ENCODE measurements at regions of chr20 and their contacts with region 1.

Region 1: GRCh38 chr20:35146920-35147574 is at the start of gene EDEM2:
- DNase-seq: peak; percentile 100
- H3K4me3 ChIP-seq: peak within 1 kb of the TSS; percentile 53
- H3K4me3 Mint-ChIP-seq: peak within 1 kb of the TSS; percentile 88
- H3K27ac Mint-ChIP-seq: peak within 1 kb of the TSS; percentile 96
- H3K4me1 ChIP-seq: peaks cover 20% of the 10 kb centered on the region
- H3K4me1 Mint-ChIP-seq: peaks cover 39% of the 10 kb centered on the region
- H3K27me3 ChIP-seq: no peaks in the 10 kb centered on the region
- H3K27me3 Mint-ChIP-seq: no peaks in the 10 kb centered on the region
- CTCF ChIP-seq: peak in 1 of 2 experiments; percentile 18
- total RNA-seq, gene EDEM2: 41.2 and 42.4 TPM in 2 replicates

Region 2: DNA sequence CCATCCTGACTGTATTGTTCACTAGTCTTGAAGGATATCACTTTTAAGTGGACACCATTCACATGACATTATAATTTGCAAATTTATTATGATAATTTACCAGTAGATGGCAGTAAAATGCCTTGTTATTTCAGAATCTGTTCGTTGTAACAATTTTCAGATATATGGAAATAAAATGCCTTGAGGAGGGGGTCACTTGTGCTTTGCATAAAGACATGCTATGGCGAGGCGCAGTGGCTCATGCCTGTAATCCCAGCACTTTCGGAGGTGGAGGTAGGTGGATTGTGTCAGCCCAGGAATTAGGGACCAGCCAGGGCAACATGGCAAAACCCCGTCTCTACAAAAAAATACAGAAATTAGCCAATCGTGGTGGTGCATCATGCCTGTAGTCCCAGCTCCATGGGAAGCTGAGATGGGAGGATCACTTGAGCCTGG is 312.6 kb before region 1 on chr20:
- CTCF ChIA-PET with region 1: interaction called, 3 read pairs
- POLR2A ChIA-PET with region 1: no interaction called
- intact Hi-C with region 1: loop called (anchors 5 kb)
- DNase-seq: peak in 1 of 2 experiments; percentile 40
- H3K4me3 ChIP-seq: no peak overlapping the region
- H3K4me3 Mint-ChIP-seq: no peak overlapping the region
- H3K27ac Mint-ChIP-seq: no peak overlapping the region
- H3K4me1 ChIP-seq: peaks cover 7% of the 10 kb centered on the region; the same call in 1 of the 2 replicates
- H3K4me1 Mint-ChIP-seq: no peaks in the 10 kb centered on the region
- H3K27me3 ChIP-seq: no peaks in the 10 kb centered on the region
- H3K27me3 Mint-ChIP-seq: peaks cover 9% of the 10 kb centered on the region
- CTCF ChIP-seq: peak; percentile 43 to 75

Region 3: DNA sequence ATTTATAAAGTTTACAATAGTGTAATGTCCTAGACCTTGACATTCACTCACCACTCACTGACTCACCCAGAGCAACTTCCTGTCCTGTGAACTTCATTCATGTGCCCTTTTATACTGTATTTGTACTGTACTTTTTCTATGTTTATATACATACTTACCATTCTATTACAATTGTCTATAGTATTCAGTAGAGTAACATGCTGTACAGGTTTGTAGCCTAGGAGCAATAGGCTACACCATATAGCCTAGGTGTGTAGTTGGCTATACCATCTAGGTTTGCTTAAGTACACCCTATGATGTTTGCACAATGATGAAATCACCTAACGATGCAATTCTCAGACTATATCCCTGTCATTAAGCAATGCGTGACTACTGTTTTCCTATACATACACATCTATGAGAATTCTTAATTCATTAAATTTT is 17.4 kb before region 1 on chr20:
- CTCF ChIA-PET with region 1: interaction called, 13 read pairs
- POLR2A ChIA-PET with region 1: interaction called, 3 read pairs
- intact Hi-C with region 1: no loop called
- DNase-seq: peak in 1 of 2 experiments; percentile 50
- H3K4me3 ChIP-seq: no peak overlapping the region
- H3K4me3 Mint-ChIP-seq: no peak overlapping the region
- H3K27ac Mint-ChIP-seq: no peak overlapping the region
- H3K4me1 ChIP-seq: peaks cover 8% of the 10 kb centered on the region; the same call in 1 of the 2 replicates
- H3K4me1 Mint-ChIP-seq: no peaks in the 10 kb centered on the region
- H3K27me3 ChIP-seq: no peaks in the 10 kb centered on the region
- H3K27me3 Mint-ChIP-seq: no peaks in the 10 kb centered on the region
- CTCF ChIP-seq: no peak

Region 4: GRCh38 chr20:35207950-35208611 is 61.0 kb after region 1 on chr20:
- CTCF ChIA-PET with region 1: interaction called, 189 read pairs
- POLR2A ChIA-PET with region 1: interaction called, 10 read pairs
- intact Hi-C with region 1: loop called (anchors 1 kb)
- DNase-seq: peak; percentile 93 to 96
- H3K4me3 ChIP-seq: no peak overlapping the region; the same call in 1 of the 2 replicates
- H3K4me3 Mint-ChIP-seq: no peak overlapping the region
- H3K27ac Mint-ChIP-seq: no peak overlapping the region
- H3K4me1 ChIP-seq: peaks cover 21% of the 10 kb centered on the region; the same call in 1 of the 2 replicates
- H3K4me1 Mint-ChIP-seq: peaks cover 5% of the 10 kb centered on the region
- H3K27me3 ChIP-seq: no peaks in the 10 kb centered on the region
- H3K27me3 Mint-ChIP-seq: no peaks in the 10 kb centered on the region
- CTCF ChIP-seq: peak; percentile 92 to 98

Region 5: DNA sequence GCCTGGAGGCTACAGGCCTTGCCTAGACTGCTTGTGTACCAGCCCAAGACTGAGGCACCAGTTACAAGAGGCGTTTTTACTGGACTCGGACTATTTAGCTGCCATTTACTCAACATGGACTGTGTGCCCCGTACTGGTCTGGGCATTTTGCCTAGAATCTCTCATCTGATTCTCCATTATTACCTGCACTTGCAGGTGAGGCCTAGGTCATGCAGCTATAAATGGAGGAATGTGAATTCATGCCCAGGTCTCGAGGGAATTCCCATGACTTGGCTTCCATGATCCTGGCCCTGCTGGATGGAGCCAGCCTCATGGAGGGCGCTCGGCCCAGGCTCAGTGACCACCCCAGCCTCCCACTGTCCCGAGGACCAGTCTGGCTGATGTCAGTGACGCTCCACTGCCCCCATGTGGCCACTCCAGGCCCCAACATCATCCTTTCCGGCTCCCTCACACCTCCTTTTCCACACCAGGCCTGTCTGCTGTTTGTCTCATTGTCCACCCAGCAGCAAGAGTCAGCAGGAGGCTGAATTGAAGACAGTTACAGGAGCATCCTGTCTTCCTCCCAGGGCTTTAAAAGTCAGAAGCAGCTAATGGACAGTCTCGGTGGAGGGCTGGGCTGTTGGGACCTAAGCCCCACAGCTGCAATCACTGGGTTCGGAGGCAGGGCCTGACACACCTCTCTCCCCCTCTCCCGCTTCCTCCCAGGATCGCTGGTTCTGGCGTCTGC is 122.2 kb after region 1 on chr20:
- CTCF ChIA-PET with region 1: interaction called, 354 read pairs
- POLR2A ChIA-PET with region 1: interaction called, 119 read pairs
- intact Hi-C with region 1: loop called (anchors 1 kb)
- DNase-seq: peak; percentile 88 to 93
- H3K4me3 ChIP-seq: no peak overlapping the region
- H3K4me3 Mint-ChIP-seq: no peak overlapping the region
- H3K27ac Mint-ChIP-seq: peak overlapping the region; percentile 38
- H3K4me1 ChIP-seq: peaks cover 19% of the 10 kb centered on the region
- H3K4me1 Mint-ChIP-seq: peaks cover 21% of the 10 kb centered on the region
- H3K27me3 ChIP-seq: no peaks in the 10 kb centered on the region
- H3K27me3 Mint-ChIP-seq: no peaks in the 10 kb centered on the region
- CTCF ChIP-seq: peak; percentile 97 to 99

Region 6: GRCh38 chr20:35303735-35304491 is 156.9 kb after region 1 on chr20:
- CTCF ChIA-PET with region 1: interaction called, 22 read pairs
- POLR2A ChIA-PET with region 1: no interaction called
- intact Hi-C with region 1: no loop called
- DNase-seq: peak; percentile 97
- H3K4me3 ChIP-seq: no peak overlapping the region
- H3K4me3 Mint-ChIP-seq: peak overlapping the region; percentile 28
- H3K27ac Mint-ChIP-seq: peak overlapping the region; percentile 54
- H3K4me1 ChIP-seq: peaks cover 44% of the 10 kb centered on the region
- H3K4me1 Mint-ChIP-seq: peaks cover 41% of the 10 kb centered on the region
- H3K27me3 ChIP-seq: no peaks in the 10 kb centered on the region
- H3K27me3 Mint-ChIP-seq: no peaks in the 10 kb centered on the region
- CTCF ChIP-seq: peak; percentile 99 to 100

Region 7: GRCh38 chr20:35541783-35542588 is 394.9 kb after region 1 on chr20 and contains the start of gene ERGIC3:
- CTCF ChIA-PET with region 1: no interaction called
- POLR2A ChIA-PET with region 1: no interaction called
- intact Hi-C with region 1: no loop called
- DNase-seq: peak; percentile 100
- H3K4me3 ChIP-seq: peak within 1 kb of the TSS; percentile 85
- H3K4me3 Mint-ChIP-seq: peak within 1 kb of the TSS; percentile 82
- H3K27ac Mint-ChIP-seq: peak within 1 kb of the TSS; percentile 89
- H3K4me1 ChIP-seq: 0 out of 2 replicates have a peak, but pooled peaks cover 5% of the 10 kb centered on the region
- H3K4me1 Mint-ChIP-seq: peaks cover 7% of the 10 kb centered on the region
- H3K27me3 ChIP-seq: no peaks in the 10 kb centered on the region
- H3K27me3 Mint-ChIP-seq: no peaks in the 10 kb centered on the region
- CTCF ChIP-seq: no peak
- total RNA-seq, gene ERGIC3: 711 and 728 TPM in 2 replicates

Measured in Caco-2 (cell line).